Motor neuron (in vitro differentiated cells): ENCODE measurements at regions of chr19 and their contacts with region 1.

Region 1: DNA sequence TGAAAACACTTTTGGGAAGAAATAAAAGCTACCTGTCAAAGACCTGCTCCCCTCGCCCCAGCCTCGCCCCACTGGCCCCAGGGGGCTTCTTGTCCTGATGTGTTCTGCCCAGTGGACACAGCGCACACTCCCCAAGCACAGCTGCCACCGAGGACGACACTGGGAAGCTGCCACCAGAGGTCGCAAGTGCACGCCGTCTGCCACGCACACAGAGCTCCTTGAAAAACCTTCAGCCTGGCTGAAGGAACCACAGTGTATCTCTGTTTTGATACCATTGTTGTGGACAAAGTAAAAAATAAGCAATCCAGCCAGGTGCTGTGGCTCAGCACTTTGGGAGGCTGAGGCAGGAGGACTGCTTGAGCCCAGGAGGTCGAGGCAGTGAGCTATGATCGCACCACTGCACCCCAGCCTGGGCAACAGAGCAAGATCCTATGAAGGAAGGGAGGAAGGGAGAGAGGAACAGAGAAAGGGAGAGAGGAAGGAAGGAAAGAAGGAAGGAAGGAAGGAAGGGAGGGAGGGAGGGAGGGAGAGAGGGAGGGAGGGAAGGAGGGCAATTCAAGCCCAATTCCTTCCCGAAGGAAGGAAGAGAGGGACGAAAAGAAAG is 57.3 kb downstream of the CEBPG start:
- ATAC-seq: peak; percentile 53 to 72 (median 60)
- H3K4me3 ChIP-seq: no peak overlapping the region
- H3K27ac ChIP-seq: no peak overlapping the region
- H3K4me1 ChIP-seq: peaks cover 59 to 80% of the 10 kb centered on the region in 2 donors

Region 2: DNA sequence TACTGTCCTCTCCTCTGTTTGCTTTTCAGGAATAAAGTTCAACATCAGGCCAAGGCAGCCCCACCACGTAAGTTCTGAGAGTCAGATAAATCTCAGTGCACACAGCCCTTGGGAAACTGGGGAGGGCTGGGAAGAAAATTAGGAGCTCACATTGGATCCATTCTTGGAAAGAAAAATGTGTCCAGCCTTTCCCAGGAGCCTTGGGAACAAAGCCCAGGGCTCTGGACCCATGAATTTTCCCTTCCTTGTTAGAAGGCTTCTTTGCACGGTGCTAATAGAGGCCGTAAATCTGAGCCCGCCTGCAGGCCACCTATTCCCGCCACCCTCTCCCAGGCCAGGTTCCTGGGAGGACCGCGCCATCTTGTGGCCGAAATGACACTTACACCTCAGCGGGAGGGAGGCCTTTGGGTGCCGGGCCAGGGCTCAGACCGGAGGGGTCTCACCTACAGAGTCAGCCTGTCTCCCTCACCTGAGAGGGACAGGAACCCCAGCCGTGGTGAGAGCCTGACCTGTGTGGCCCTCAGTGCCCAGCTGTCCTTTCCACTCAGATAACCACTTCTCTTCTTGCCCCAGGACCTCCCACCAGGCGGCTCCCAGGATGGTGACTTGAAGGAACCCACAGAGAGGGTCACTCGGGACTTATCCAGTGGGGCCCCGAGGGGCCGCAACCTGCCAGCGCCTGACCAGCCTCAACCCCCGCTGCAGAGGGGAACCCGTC is 340.8 kb after region 1 on chr19:
- in situ Hi-C with region 1: loop called (anchors 10 to 25 kb)
- ATAC-seq: peak; percentile 70 to 86 (median 82)
- H3K4me3 ChIP-seq: no peak overlapping the region
- H3K27ac ChIP-seq: peak overlapping the region in 1 of 2 donors; percentile 2
- H3K4me1 ChIP-seq: peaks cover 17 to 23% of the 10 kb centered on the region in 2 donors